A673 (cell line): ENCODE measurements at regions of chr4 and their contacts with region 1.

Region 1: GRCh38 chr4:144141493-144141892 is 975 bp upstream of the GYPA start:
- DNase-seq: no peak
- H3K4me3 ChIP-seq: no peak overlapping the region
- H3K27ac ChIP-seq: no peak overlapping the region
- H3K4me1 ChIP-seq: no peaks in the 10 kb centered on the region
- H3K27me3 ChIP-seq: peaks cover 5% of the 10 kb centered on the region
- CTCF ChIP-seq: no peak

Region 2: DNA sequence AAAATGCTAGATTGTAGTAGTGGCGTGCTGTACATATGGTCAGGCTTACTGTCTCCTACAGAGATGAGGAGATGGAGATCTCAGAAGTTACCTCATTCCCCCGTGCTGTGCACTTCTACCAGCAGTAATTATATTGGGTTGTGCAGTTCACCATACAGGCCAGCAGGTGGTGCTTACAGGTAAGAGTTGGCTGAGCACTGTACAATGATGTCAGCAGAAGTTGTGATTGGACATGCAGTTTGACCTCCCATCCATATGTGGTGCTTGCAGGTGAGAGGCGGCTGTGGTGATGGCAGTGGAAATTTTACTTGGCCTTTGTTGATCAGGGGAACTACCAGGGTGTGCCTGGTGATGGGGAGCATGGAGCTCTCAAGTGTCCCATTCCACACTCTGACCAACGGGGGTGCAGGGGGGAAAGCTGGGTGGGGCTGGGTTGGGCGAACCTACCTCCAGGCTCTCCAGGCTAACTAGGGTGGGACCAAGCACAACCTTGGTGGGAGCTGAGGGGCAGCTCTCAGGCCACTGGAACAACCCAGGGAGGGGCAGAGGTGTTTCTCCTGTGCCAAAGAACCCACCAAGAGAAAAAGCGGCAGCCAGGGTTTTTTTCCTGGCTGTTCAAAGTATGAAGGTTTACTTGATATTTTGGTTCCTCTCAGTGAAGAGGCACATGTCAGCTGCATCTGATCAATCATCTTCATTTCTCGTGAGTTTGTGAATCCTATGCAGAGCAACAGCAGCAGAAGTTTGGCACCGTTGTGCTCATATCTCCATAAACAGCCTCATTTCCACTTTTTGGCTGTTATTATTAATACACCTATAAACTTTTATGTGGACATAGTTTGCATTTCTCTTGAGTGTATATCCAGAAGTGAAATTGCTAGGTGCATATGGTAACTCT is 367.2 kb before region 1 on chr4:
- CTCF ChIA-PET with region 1: no interaction called
- POLR2A ChIA-PET with region 1: no interaction called
- intact Hi-C with region 1: loop called (anchors 10 kb)
- DNase-seq: peak; percentile 72
- H3K4me3 ChIP-seq: no peak overlapping the region
- H3K27ac ChIP-seq: no peak overlapping the region
- H3K4me1 ChIP-seq: no peaks in the 10 kb centered on the region
- H3K27me3 ChIP-seq: no peaks in the 10 kb centered on the region
- CTCF ChIP-seq: peak; percentile 78